Thyroid gland (tissue), 4 donors: ENCODE measurements at regions of chr1 and their contacts with region 1.

Region 1: DNA sequence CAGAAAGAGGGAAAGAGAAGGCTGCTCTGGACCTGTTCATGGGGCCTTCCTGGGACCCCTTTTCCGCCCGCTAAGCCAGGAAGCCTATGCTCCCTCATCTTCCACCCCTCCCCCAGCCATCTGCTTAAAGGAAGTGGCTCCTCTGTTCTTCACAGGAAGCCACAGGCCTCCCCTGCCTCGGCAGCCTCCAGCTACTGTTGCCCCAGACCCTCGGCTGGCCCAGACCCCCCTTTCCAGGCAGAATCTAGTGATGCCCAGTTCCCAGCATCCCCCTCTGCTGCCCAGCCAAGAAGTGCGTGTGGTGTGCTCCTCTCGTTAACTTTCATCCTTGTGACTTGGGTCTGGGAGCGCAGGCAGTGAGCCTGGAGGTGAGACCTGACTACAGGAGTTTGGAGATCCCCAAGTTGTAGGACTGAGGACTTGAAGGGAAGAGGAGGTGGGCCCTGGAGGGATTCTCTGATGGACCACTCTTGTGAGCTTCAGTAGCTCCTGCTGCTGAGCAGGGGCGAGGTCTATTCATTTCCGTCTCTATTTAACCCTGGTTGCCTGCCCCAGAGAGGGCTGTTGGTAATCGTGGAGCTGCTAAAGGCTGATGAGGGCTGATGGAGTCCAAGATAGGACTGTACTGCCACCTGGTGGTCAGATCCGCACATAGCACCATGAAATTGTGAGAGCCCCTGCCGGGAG is 9.1 kb downstream of the IFI6 start:
- DNase-seq: peak; percentile 76 to 83
- H3K4me3 ChIP-seq: no peak overlapping the region
- H3K27ac ChIP-seq: peak overlapping the region in 1 of 3 donors; percentile 30
- H3K4me1 ChIP-seq: peaks cover 0 to 23% of the 10 kb centered on the region in 2 donors
- H3K27me3 ChIP-seq: no peaks in the 10 kb centered on the region
- CTCF ChIP-seq: peak; percentile 80 to 95 (median 92)
- POLR2A ChIP-seq: no peak

Region 2: GRCh38 chr1:27402349-27402754 is 260.5 kb before region 1 on chr1:
- intact Hi-C with region 1: loop called (anchors 5 kb)
- DNase-seq: peak; percentile 89 to 92
- H3K4me3 ChIP-seq: no peak overlapping the region
- H3K27ac ChIP-seq: peak overlapping the region; percentile 69 to 79 (median 70)
- H3K4me1 ChIP-seq: peaks cover 20 to 49% of the 10 kb centered on the region in 2 donors
- H3K27me3 ChIP-seq: no peaks in the 10 kb centered on the region
- CTCF ChIP-seq: peak; percentile 38 to 91 (median 80)
- POLR2A ChIP-seq: peak in 1 of 2 donors; percentile 16

Region 3: GRCh38 chr1:27556781-27557595 is 105.9 kb before region 1 on chr1:
- intact Hi-C with region 1: loop called (anchors 5 kb)
- DNase-seq: peak; percentile 97 to 98
- H3K4me3 ChIP-seq: peak overlapping the region in 1 of 3 donors; percentile 1
- H3K27ac ChIP-seq: peak overlapping the region; percentile 60 to 82 (median 76)
- H3K4me1 ChIP-seq: peaks cover 41 to 50% of the 10 kb centered on the region in 2 donors
- H3K27me3 ChIP-seq: no peaks in the 10 kb centered on the region
- CTCF ChIP-seq: peak; percentile 78 to 96 (median 84)
- POLR2A ChIP-seq: peak in 1 of 2 donors; percentile 31

Region 4: DNA sequence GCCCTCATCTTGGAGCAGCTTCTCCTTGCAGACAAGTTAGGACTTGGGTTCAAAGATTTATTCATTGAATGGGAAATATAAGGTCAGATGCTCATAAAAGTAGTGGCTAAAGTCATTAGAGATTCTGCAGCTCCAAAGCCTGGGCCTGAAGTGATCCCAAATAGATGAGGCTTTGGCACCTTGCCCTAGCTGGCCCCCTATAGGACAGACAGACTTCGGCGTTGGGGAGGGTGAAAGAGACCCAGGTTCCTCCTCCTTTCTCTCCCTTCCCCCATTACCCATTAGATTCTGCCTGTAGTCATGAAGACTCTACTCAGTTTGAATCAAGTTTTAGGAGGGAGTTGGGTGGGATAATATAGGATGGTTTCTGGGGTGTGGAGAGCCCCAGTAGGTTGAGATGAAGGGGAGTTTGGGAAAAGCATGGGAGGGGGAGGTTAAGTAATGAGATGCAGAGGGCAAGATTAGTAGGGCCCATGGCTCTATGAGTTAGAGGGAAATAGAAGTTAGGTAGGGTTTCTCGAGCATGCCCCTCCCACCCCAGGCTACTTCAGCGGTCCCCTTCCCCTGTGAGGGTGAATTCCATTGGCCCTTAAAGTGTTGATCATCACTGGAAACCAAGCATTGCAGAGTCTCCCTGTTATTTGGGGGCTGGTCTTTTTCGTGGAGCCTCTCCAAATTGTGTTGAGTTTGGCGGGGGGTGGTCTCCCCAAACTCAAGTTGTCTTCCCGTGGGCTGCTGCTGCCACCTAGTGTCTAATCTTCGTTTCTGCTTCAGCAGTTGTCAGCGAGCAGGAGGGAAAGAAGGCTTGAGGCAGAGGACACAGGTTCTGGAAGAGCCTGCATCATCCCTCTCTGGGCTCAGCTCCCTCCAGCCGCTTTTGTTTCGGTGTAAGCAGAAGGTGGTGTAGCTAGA is 56.8 kb before region 1 on chr1:
- intact Hi-C with region 1: loop called (anchors 2 kb)
- DNase-seq: peak; percentile 53 to 61
- H3K4me3 ChIP-seq: no peak overlapping the region
- H3K27ac ChIP-seq: no peak overlapping the region
- H3K4me1 ChIP-seq: peaks cover 22 to 24% of the 10 kb centered on the region in 2 donors
- H3K27me3 ChIP-seq: no peaks in the 10 kb centered on the region
- CTCF ChIP-seq: peak; percentile 72 to 96 (median 88)
- POLR2A ChIP-seq: no peak